ENCODE measurements at regions of chr16 and their contacts with region 1.

Region 1: DNA sequence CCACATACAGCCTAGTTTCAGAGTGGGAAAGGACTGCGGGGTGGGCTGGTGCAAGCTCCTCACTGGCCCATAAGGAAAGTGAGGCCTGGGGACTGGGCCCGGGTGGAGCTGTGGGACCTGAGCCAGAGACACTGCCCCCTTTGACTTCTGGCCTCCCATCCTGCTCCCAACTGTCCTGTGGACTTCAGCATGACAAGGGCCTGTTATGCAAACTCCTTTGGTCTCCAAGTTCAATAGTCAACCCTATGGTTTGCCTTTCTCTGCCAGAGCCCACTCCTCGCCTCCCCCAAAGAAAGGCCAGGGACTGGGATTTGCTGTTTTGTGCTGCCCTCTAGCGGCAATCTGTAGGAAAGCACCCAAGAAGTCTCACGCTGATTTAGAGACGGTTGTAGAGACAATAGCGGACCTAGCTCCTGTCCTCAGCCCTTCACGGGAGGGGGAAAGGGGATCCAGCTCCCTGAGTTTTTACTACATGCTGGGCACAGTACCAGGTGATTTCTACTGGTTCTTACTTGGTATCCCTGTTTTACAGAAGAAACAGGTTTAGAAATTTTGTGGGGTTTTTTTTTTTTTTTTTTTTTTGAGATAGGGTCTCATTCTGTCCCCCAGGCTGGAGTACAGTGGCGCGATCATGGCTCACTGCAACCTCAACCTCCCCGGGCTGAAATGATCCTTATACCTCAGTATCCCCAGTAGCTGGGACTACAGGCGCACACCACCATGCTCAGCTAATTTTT is 1.2 kb upstream of the TLCD3B start:
- DNase-seq: peak in 1 of 2 donors; percentile 36
- H3K4me3 ChIP-seq: no peak overlapping the region
- H3K27ac ChIP-seq: no peak overlapping the region
- H3K4me1 ChIP-seq: no peaks in the 10 kb centered on the region
- H3K27me3 ChIP-seq: peaks cover 10 to 40% of the 10 kb centered on the region in 2 donors
- CTCF ChIP-seq: peak; percentile 44 to 51 (median 46)
- POLR2A ChIP-seq: no peak

Region 2: DNA sequence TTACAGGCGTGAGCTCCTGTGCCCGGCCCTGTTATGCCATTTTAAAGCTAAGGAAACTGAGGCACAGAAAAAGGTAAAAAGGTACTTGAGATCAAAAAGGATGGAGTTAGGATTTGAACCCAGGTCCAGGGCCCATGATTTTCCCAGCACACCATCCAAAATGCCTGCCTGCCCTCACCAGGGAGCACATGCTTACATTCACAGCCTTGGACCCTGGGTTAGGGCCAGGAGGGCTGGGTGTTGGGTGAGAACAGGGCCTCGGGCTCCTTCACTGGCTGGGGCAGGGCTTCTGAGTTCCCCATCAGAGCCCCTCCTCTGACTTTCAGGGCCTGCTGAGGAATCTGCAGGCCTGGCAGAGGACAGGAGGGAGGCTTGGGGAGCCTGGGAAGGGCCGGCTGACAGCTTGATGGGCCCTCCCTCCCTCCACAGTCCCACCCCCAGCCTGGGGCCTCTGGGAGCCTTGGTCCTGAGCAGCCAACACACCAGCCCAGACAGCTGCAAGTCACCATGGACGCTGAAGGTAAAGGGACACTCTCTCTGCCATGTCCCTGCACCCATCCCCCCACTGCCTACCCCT is 353.5 kb before region 1 on chr16 and contains the start of gene QPRT:
- intact Hi-C with region 1: no loop called
- DNase-seq: peak; percentile 47 to 66
- H3K4me3 ChIP-seq: peak within 1 kb of the TSS; percentile 36 to 41
- H3K27ac ChIP-seq: peak within 1 kb of the TSS; percentile 76 to 90
- H3K4me1 ChIP-seq: no peaks in the 10 kb centered on the region
- H3K27me3 ChIP-seq: no peaks in the 10 kb centered on the region
- CTCF ChIP-seq: no peak
- POLR2A ChIP-seq: peak in 1 of 2 donors; percentile 12
- total RNA-seq, gene QPRT: 16.7 to 54.3 (median 23.1) TPM

Region 3: DNA sequence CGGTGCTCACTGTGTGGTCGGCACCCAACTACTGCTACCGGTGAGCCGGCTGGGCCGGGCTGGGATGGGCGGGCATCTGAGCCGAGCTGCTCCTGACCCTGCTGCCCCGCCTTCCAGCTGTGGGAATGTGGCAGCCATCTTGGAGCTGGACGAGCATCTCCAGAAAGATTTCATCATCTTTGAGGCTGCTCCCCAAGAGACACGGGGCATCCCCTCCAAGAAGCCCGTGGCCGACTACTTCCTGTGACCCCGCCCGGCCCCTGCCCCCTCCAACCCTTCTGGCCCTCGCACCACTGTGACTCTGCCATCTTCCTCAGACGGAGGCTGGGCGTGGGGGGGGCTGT is 52.5 kb after region 1 on chr16:
- intact Hi-C with region 1: loop called (anchors 5 kb)
- DNase-seq: peak; percentile 55 to 59
- H3K4me3 ChIP-seq: no peak overlapping the region
- H3K27ac ChIP-seq: peak overlapping the region; percentile 34 to 56
- H3K4me1 ChIP-seq: no peaks in the 10 kb centered on the region
- H3K27me3 ChIP-seq: no peaks in the 10 kb centered on the region
- CTCF ChIP-seq: no peak
- POLR2A ChIP-seq: no peak